ENCODE measurements at regions of chr14 and their contacts with region 1.

Region 1: DNA sequence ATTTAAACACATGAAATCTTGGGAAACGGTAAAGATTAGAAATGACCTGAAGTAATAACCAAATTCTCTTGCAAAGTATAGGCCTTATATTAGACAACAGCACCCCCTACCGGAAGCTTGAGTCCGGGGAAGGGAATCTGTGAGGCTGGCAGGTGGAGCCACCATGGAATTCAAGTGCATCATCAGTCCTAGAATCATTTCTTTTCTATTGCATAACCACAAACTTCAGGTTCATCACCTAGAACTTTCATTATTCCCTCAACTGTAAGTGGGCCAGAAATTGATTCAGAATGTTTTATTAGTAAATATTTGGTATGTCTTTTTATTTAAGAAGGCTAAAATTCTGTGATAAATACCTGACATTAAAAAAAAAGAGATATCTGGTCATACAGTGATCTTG is 48.5 kb downstream of the AP5M1 start:
- DNase-seq: peak; percentile 59 to 81
- ATAC-seq: peak; percentile 83 to 92
- H3K4me3 ChIP-seq: no peak overlapping the region
- H3K27ac ChIP-seq: no peak overlapping the region
- H3K4me1 ChIP-seq: no peaks in the 10 kb centered on the region
- CTCF ChIP-seq: peak; percentile 91
- EP300 ChIP-seq: no peak
- POLR2A ChIP-seq: no peak
- RAD21 ChIP-seq: peak; percentile 90 to 91

Region 2: DNA sequence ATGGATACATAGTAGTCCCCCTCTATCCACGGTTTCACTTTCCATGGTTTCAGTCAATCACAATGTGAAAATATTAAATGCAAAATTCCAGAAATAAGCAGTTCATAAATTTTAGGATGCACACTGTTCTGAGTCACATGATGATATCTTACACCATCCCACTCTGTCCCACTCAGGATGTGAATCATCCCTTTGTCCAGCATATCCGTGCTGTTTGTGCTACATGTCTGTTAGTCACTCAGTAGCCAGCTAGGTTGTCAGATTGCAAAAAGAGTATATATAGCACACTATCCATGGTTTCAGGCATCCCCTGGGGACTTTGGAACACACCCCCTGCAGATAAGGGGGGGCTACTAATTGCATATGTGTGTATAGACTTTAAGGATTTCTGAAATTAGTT is 65.0 kb after region 1 on chr14:
- CTCF ChIA-PET with region 1: interaction called, 11 read pairs
- POLR2A ChIA-PET with region 1: no interaction called
- DNase-seq: peak in 1 of 2 experiments; percentile 38
- ATAC-seq: peak; percentile 76 to 91
- H3K4me3 ChIP-seq: no peak overlapping the region
- H3K27ac ChIP-seq: no peak overlapping the region
- H3K4me1 ChIP-seq: peaks cover 8% of the 10 kb centered on the region; the same call in 1 of the 3 replicates
- CTCF ChIP-seq: no peak
- EP300 ChIP-seq: no peak
- POLR2A ChIP-seq: no peak
- RAD21 ChIP-seq: no peak

Measured in A549 (cell line).